Right lobe of liver (tissue), 6 donors: ENCODE measurements at regions of chr3 and their contacts with region 1.

Region 1: GRCh38 chr3:196842567-196843434 is 24.9 kb upstream of the SENP5 start:
- DNase-seq: no peak
- ATAC-seq: no peak
- H3K4me3 ChIP-seq: no peak overlapping the region
- H3K27ac ChIP-seq: no peak overlapping the region
- H3K4me1 ChIP-seq: peaks cover 0 to 18% (median 5%) of the 10 kb centered on the region in 4 donors
- H3K27me3 ChIP-seq: no peaks in the 10 kb centered on the region
- CTCF ChIP-seq: no peak
- POLR2A ChIP-seq: no peak

Region 2: GRCh38 chr3:196684548-196685407 is 158.0 kb before region 1 on chr3:
- intact Hi-C with region 1: no loop called
- DNase-seq: peak in 2 of 3 donors; percentile 34 to 63
- ATAC-seq: peak; percentile 86 to 91 (median 88)
- H3K4me3 ChIP-seq: no peak overlapping the region
- H3K27ac ChIP-seq: no peak overlapping the region
- H3K4me1 ChIP-seq: peaks cover 0 to 7% (median 0%) of the 10 kb centered on the region in 4 donors
- H3K27me3 ChIP-seq: no peaks in the 10 kb centered on the region
- CTCF ChIP-seq: peak; percentile 89 to 90 (median 89)
- POLR2A ChIP-seq: no peak

Region 3: DNA sequence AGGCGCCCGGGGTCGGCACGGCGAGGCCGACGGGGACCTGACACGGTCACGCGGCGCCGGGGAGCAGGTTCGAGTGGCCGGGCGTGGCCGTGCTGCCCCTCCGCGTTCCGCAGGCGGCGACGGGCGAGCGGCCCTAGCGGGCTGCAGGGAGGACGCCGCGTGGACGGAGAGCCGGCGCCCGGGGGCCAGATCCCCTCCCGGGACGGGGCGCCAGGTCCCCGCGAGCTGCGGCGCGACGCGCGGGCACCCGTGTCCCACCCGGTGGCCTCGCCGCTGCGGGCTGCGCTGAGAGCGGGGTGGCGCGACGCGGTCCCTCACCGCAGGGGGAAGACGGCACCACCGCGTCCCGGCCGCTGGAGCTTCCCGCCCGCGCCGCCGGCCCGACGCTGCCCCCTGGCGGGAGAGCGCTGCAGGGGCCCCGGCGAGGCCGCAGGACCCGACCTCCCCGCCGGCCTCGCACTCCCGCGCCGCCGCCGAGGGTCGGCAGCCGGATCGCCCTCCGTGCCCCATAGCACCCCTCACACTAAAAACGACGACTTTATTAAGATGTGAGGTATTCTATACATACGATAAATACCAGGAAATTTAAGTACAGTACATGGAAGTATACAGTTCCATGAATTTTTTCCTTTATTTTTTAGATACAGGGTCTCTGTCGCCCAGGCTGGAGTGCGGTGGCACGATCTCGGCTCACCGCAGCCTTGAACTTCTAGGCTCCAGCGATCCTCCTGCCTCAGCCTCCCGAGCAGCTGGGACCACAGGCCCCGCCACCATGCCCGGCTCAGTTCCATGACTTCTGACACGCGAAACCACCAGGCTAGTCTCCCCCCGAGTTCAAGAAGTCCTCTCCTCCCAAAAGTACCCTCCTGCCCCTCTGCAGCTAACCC is 127.1 kb after region 1 on chr3:
- intact Hi-C with region 1: loop called in 1 of 2 experiments (anchors 10 kb)
- DNase-seq: peak; percentile 71 to 76 (median 71)
- ATAC-seq: peak; percentile 88 to 94 (median 91)
- H3K4me3 ChIP-seq: peak overlapping the region; percentile 70 to 90 (median 74)
- H3K27ac ChIP-seq: peak overlapping the region in 2 of 3 donors; percentile 22 to 67
- H3K4me1 ChIP-seq: peaks cover 0 to 6% (median 0%) of the 10 kb centered on the region in 4 donors
- H3K27me3 ChIP-seq: no peaks in the 10 kb centered on the region
- CTCF ChIP-seq: peak; percentile 74 to 96 (median 90)
- POLR2A ChIP-seq: peak; percentile 15